A673 (cell line): ENCODE measurements at regions of chr19 and their contacts with region 1.

Region 1: DNA sequence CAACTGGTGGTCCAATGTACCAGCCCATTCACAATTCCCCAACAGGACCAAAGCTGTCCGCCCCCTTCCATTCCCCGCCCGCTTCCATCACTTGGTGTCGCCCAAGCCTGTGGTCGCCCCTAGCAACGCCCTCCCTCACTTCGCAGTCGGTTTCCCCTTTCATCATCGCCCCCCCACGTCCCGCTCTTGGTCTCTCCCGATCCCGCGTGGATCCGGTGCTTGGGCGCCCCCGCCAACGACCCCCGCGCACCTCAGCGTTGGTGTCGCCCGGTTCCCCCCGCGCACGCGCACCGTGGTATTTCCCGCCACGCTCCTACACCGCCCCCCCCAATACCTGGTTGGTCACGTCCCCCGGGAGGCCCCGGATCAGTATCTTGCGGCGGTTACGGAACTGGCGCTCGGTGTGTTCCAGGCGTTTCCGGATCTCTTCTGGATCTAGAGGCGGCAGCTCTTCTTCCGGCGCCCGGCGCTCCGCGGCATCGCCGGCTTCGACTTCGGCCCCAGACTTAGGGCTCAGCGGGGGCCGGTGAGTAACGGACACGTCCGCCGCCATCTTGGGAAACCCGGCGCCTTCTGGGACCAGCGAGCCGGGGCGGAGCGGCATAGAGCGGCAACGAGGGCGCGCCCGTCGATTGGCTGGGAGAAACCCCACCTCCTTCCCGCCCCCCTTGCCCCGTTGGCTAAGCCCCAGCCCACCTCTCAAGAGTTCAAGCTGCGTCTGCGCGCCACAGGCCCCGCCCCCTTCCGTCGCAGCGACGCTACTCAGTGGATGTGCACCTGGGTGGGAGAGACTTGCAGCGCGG is at the start of gene RAVER1:
- DNase-seq: peak; percentile 98
- H3K4me3 ChIP-seq: peak within 1 kb of the TSS; percentile 85
- H3K27ac ChIP-seq: peak within 1 kb of the TSS; percentile 99
- H3K4me1 ChIP-seq: peaks cover 28% of the 10 kb centered on the region
- H3K27me3 ChIP-seq: no peaks in the 10 kb centered on the region
- CTCF ChIP-seq: no peak
- total RNA-seq, gene RAVER1: 84.6 and 87.7 TPM in 2 replicates

Region 2: DNA sequence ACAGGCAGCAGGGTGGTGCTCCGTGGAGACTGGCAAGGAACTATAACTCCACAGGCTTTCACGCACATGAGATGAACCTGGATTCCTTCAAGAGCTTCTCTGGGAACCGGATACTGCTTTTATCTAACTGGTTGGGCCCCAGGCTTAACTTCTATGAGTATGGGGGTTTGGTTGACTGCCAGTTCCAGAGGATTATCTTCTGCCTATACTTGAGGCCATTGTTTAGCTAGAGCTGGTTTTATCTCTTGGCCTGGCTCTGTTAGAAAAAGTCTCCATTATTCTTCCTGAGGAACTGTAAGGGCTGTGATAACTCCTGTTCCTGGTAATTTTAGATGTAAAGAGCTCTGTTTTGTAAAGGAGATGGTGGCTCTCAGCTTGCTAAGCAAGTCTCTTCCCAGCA is 605.5 kb before region 1 on chr19:
- CTCF ChIA-PET with region 1: no interaction called
- POLR2A ChIA-PET with region 1: no interaction called
- intact Hi-C with region 1: no loop called
- DNase-seq: peak; percentile 80
- H3K4me3 ChIP-seq: no peak overlapping the region
- H3K27ac ChIP-seq: peak overlapping the region; percentile 26
- H3K4me1 ChIP-seq: peaks cover 13% of the 10 kb centered on the region
- H3K27me3 ChIP-seq: no peaks in the 10 kb centered on the region
- CTCF ChIP-seq: no peak

Region 3: DNA sequence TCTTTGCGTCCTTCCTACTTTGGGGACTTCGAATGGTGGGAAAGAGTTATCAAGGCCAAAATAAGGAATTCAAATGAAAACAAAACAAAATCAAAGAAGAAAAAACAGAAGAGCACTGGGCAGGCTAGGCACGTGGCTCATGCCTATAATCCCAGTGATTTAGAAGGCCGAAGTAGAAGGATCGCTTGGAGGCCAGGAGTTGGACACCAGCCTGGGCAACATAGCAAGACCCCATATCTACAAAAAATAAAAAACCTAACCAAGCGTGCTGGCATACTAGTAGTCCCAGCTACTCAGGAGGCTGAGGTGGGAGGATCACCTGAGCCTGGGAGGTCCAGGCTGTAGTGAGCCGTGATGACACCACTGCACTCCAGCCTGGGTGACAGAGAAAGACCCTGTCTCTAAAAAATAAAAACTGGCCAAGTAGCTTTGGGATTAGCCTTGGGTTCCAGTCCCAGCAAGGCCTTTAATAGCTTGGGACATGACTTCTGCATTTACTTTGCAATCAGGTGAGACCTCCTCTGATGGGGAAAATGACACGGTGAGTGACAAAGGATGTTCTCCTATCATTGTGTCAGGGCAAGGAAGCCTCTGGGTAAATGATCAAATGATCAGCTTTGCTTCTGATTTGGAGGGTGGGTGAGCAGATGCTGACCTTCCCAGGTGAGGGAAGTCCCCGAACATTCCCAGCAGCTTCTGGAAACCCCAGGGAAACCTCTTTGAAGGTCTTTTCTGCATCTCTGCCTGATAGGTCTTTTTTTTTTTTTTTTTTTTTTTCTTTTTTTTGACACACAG is 55.2 kb before region 1 on chr19:
- CTCF ChIA-PET with region 1: no interaction called
- POLR2A ChIA-PET with region 1: no interaction called
- intact Hi-C with region 1: no loop called
- DNase-seq: no peak
- H3K4me3 ChIP-seq: no peak overlapping the region
- H3K27ac ChIP-seq: no peak overlapping the region
- H3K4me1 ChIP-seq: no peaks in the 10 kb centered on the region
- H3K27me3 ChIP-seq: no peaks in the 10 kb centered on the region
- CTCF ChIP-seq: no peak

Region 4: GRCh38 chr19:10289167-10289835 is 43.9 kb before region 1 on chr19:
- CTCF ChIA-PET with region 1: no interaction called
- POLR2A ChIA-PET with region 1: no interaction called
- intact Hi-C with region 1: loop called (anchors 2 kb)
- DNase-seq: peak; percentile 92
- H3K4me3 ChIP-seq: peak overlapping the region; percentile 47
- H3K27ac ChIP-seq: peak overlapping the region; percentile 44
- H3K4me1 ChIP-seq: peaks cover 56% of the 10 kb centered on the region
- H3K27me3 ChIP-seq: peaks cover 19% of the 10 kb centered on the region
- CTCF ChIP-seq: no peak

Region 5: DNA sequence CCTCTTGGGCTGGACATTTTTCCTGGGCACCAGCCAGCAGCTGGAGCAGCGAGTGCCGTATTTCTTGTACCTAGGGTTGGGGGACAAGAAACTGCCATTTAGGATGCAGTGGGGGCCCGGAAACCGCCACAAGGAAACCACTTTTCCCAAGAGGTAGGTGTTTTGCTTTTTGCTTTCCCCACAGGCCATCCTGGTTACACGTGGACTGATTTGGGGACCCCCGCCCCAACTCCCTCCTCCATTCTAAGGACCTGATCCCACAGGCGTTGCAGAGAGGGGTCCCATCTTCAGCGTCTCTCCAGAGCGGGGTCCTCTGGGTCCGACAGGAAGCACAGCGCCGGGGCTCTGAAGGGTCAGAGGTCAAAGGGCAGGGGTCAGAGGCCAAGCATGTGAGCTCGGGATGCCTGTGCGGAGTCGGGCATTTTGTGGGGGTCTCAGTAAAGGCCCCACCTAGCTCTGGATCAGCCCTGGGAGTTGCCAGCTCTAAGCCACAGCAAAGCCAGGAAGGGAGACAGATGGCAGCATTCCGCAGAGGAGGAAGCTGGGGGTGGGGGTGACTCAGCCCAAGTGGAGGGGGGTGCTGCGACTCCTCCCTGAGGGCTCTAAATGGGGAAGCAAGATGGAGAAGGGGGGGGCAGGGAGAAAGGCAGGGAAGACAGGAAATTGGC is 27.9 kb before region 1 on chr19:
- CTCF ChIA-PET with region 1: no interaction called
- POLR2A ChIA-PET with region 1: interaction called, 10 read pairs
- intact Hi-C with region 1: no loop called
- DNase-seq: peak; percentile 47
- H3K4me3 ChIP-seq: no peak overlapping the region
- H3K27ac ChIP-seq: peak overlapping the region; percentile 66
- H3K4me1 ChIP-seq: peaks cover 6% of the 10 kb centered on the region
- H3K27me3 ChIP-seq: no peaks in the 10 kb centered on the region
- CTCF ChIP-seq: no peak

Region 6: GRCh38 chr19:10380313-10381102 is 47.4 kb after region 1 on chr19 and contains the start of gene TYK2:
- CTCF ChIA-PET with region 1: no interaction called
- POLR2A ChIA-PET with region 1: no interaction called
- intact Hi-C with region 1: loop called (anchors 5 kb)
- DNase-seq: peak; percentile 99
- H3K4me3 ChIP-seq: peak within 1 kb of the TSS; percentile 91
- H3K27ac ChIP-seq: peak within 1 kb of the TSS; percentile 85
- H3K4me1 ChIP-seq: peaks cover 5% of the 10 kb centered on the region
- H3K27me3 ChIP-seq: no peaks in the 10 kb centered on the region
- CTCF ChIP-seq: no peak
- total RNA-seq, gene TYK2: 118 and 121 TPM in 2 replicates

Region 7: DNA sequence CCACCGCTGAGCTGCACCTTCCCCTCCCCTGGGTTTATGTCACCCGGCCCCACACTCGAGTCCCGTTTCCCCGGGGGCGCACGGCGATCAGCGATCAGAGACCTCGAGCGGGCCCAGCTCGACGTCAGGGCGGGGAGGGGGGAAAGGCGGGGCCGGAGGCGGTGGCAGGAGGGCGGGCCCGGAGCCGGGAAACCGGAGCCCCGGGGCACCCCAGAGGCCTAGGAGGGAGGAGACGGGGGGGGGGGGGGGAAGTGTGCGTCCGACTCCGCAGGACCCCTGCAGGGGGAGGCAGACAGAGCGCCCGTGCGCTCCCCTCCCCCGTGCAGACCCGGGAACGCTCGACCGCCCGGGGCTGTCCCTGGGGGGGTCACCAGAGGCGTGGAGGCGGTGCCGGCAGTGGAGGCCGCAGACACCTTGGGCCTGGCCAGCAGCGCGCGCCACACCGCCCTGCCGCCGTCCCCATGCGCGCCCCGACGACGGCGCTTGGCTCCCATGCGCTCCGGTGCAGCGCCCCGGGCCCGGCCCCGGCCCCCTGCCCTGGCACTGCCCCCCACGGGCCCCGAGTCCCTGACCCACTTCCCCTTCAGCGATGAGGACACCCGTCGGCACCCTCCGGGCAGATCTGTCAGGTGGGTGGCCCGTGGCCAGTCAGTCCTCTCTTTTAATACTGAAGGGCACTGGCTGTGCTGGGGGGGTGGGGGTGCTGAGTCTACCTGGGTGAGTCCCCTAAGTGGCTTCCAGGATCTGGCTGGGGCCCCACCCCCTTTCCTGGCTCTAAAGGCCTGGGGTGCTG is 99.0 kb after region 1 on chr19:
- CTCF ChIA-PET with region 1: interaction called, 11 read pairs
- POLR2A ChIA-PET with region 1: no interaction called
- intact Hi-C with region 1: no loop called
- DNase-seq: peak; percentile 61
- H3K4me3 ChIP-seq: peak overlapping the region; percentile 41
- H3K27ac ChIP-seq: peak overlapping the region; percentile 75
- H3K4me1 ChIP-seq: peaks cover 14% of the 10 kb centered on the region
- H3K27me3 ChIP-seq: no peaks in the 10 kb centered on the region
- CTCF ChIP-seq: no peak